ENCODE measurements at regions of chr3 and their contacts with region 1.

Region 1: GRCh38 chr3:89395456-89395855 is 288.0 kb downstream of the EPHA3 start:
- DNase-seq: no peak
- ATAC-seq: no peak
- H3K4me3 ChIP-seq: no peak overlapping the region
- H3K27ac ChIP-seq: no peak overlapping the region
- H3K4me1 ChIP-seq: no peaks in the 10 kb centered on the region
- H3K27me3 ChIP-seq: peaks cover 57% of the 10 kb centered on the region
- CTCF ChIP-seq: no peak

Region 2: DNA sequence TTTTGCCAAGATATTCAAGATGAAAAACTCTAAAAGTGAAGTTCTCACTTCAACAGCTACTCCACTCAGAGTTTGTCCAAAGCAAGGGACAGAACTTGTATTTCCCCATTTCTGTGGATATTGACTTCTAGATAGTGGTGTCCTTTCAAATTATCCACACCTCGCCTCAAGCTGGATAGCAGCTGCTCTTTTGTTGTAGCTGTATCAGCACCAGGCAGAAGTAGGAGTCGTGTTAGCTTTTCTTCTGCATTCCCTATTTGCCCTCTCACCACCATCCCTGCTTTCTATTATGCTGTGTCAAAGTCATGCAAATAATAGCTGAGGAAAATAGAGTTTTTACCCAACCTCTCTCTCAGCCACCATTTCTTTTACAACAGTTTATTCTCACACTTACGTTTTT is 15.7 kb after region 1 on chr3:
- CTCF ChIA-PET with region 1: no interaction called
- POLR2A ChIA-PET with region 1: interaction called, 15 read pairs
- intact Hi-C with region 1: no loop called
- DNase-seq: no peak
- ATAC-seq: no peak
- H3K4me3 ChIP-seq: no peak overlapping the region
- H3K27ac ChIP-seq: no peak overlapping the region
- H3K4me1 ChIP-seq: no peaks in the 10 kb centered on the region
- H3K27me3 ChIP-seq: peaks cover 50% of the 10 kb centered on the region
- CTCF ChIP-seq: no peak